ENCODE measurements at regions of chr1 and their contacts with region 1.

Region 1: DNA sequence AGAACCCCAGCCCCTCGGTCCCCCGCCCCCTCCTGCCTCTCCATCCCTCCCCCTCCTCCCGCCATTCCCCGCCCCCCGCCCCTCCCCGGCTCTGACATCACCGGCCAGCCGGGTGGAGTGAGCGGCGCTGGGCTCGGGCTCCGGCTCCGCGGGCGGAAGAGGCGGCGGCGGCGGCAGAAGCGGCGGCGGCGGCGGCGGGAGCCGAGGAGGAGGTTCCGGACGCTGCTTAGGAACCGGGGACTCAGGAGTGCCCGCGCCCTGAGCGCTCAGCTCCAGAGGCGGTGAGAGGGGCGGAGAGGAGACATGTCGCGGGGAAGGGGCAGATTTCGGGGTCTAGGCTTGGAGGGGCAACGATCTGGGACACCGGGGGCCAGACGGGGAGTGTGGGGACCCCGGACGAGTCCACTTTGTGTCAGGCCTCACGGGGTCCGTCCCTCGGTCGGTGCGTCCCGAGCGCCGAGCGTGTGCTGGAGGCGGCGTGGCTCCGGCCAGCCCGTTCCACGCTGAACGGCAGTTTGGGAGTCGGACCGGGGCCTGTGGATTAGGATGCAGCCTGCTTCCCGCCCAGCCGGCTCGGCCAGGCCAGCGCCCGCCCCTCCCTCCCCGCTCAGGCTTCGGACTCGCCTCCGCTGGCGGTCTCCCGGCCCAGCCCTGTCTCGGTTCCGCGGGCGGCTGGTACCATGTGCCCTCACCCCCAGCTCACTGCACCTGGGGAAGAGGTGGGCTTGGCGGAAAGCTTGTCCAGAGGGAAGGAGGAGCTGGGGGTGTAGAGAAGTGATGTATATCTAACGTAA is at the start of gene PEA15:
- DNase-seq: peak; percentile 70
- ATAC-seq: peak; percentile 76
- H3K4me3 Mint-ChIP-seq: peak within 1 kb of the TSS; percentile 82
- H3K27ac Mint-ChIP-seq: peak within 1 kb of the TSS; percentile 87
- H3K4me1 Mint-ChIP-seq: peaks cover 48% of the 10 kb centered on the region
- H3K27me3 Mint-ChIP-seq: no peaks in the 10 kb centered on the region
- CTCF ChIP-seq: no peak
- total RNA-seq, gene PEA15: 31.8 to 34.1 TPM

Region 2: DNA sequence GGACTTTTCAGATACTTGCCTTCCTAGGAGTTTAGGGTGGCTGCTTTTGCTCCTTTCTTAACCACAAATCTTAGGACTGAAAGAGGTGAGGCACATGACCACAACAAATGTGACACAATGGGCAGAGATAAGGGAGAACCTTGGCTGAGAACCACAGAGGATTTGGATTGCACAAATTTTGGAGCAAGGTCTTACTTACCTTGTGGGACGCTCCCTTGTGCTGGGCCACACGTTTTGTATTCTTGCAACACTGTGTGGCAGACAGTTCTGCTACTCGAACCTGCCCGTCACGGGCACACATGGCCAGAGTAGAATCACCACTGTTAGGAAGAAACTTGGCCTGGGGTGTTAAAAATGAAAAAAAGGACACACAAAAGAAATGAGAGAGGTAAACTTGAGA is 33.0 kb after region 1 on chr1:
- CTCF ChIA-PET with region 1: interaction called, 3 read pairs
- POLR2A ChIA-PET with region 1: interaction called, 3 read pairs
- intact Hi-C with region 1: loop called (anchors 2 kb)
- DNase-seq: no peak
- ATAC-seq: no peak
- H3K4me3 Mint-ChIP-seq: no peak overlapping the region
- H3K27ac Mint-ChIP-seq: no peak overlapping the region
- H3K4me1 Mint-ChIP-seq: peaks cover 16% of the 10 kb centered on the region
- H3K27me3 Mint-ChIP-seq: no peaks in the 10 kb centered on the region
- CTCF ChIP-seq: no peak

Region 3: GRCh38 chr1:160437432-160438316 is 232.2 kb after region 1 on chr1:
- CTCF ChIA-PET with region 1: no interaction called
- POLR2A ChIA-PET with region 1: no interaction called
- intact Hi-C with region 1: no loop called
- DNase-seq: peak; percentile 49
- ATAC-seq: peak; percentile 88
- H3K4me3 Mint-ChIP-seq: peak overlapping the region; percentile 66
- H3K27ac Mint-ChIP-seq: peak overlapping the region; percentile 93
- H3K4me1 Mint-ChIP-seq: peaks cover 53% of the 10 kb centered on the region
- H3K27me3 Mint-ChIP-seq: no peaks in the 10 kb centered on the region
- CTCF ChIP-seq: no peak